ENCODE measurements at regions of chr19 and their contacts with region 1.

Region 1: GRCh38 chr19:41883821-41884733 is 1.1 kb downstream of the ARHGEF1 start:
- DNase-seq: peak; percentile 94
- ATAC-seq: peak; percentile 75
- H3K4me3 Mint-ChIP-seq: peak overlapping the region; percentile 68
- H3K27ac Mint-ChIP-seq: peak overlapping the region; percentile 96
- H3K4me1 Mint-ChIP-seq: peaks cover 54% of the 10 kb centered on the region
- H3K27me3 Mint-ChIP-seq: no peaks in the 10 kb centered on the region

Region 2: DNA sequence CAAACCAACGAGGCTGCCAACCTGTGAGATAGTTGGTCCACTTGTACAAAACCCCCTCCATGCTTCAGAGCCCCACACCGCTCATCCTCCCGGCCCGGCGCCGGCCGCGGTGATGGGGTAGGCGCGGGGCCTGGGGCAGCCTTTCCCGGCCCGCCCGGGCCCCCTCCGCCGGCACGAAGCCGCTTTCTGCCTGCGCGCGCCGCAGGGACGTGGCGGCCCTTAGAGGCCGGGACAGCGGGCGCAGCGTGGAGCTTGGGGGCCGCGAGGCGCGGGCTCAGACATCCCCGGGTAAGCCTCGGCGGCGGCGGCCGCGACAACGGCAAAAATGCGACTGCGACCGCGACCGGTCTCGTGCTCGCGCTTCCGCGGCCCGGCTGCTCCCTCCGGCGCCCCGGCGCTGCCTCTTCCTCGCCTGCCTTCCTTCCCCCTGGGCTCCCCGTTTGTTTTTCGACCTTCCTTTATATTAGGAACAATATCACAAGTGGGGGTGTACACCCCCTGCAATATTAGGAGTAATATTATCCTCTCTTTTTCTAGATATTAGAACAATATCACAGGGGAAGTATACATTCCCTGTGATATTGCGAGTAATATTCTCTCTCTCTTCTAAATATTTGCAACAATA is 362.0 kb before region 1 on chr19:
- CTCF ChIA-PET with region 1: no interaction called
- POLR2A ChIA-PET with region 1: no interaction called
- intact Hi-C with region 1: no loop called
- DNase-seq: peak; percentile 64
- ATAC-seq: peak; percentile 51
- H3K4me3 Mint-ChIP-seq: peak overlapping the region; percentile 66
- H3K27ac Mint-ChIP-seq: peak overlapping the region; percentile 89
- H3K4me1 Mint-ChIP-seq: peaks cover 20% of the 10 kb centered on the region
- H3K27me3 Mint-ChIP-seq: peaks cover 14% of the 10 kb centered on the region

Region 3: DNA sequence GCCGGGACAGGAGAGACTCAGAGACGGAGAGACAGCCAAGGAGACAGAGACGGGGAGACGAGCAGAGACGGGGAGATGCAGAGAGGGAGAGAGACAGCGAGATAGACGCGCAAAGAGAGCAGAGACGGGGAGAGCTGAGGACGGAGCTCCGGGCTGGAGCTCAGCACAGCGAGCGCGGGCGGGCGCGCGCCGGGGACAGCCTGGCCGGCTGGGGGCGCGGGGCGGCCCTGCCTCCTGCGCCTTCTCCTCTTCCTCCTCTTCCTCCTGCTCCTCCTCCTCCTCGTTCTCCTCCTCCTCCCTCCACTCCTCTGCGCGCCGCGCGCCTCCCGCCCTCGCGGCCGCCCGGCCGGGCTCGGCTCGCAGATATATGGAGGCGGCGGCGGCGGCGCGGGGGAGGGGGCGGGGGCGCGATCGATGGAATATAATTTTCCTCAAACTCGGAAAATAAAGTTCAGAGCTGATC is 44.2 kb after region 1 on chr19 and contains the start of gene ERFL:
- CTCF ChIA-PET with region 1: interaction called, 3 read pairs
- POLR2A ChIA-PET with region 1: no interaction called
- intact Hi-C with region 1: loop called (anchors 2 to 5 kb)
- DNase-seq: peak; percentile 56
- ATAC-seq: peak; percentile 54
- H3K4me3 Mint-ChIP-seq: peak within 1 kb of the TSS; percentile 77
- H3K27ac Mint-ChIP-seq: peak within 1 kb of the TSS; percentile 81
- H3K4me1 Mint-ChIP-seq: peaks cover 20% of the 10 kb centered on the region
- H3K27me3 Mint-ChIP-seq: peaks cover 1% of the 10 kb centered on the region
- total RNA-seq, gene ERFL: 1.7 to 1.9 TPM

Region 4: DNA sequence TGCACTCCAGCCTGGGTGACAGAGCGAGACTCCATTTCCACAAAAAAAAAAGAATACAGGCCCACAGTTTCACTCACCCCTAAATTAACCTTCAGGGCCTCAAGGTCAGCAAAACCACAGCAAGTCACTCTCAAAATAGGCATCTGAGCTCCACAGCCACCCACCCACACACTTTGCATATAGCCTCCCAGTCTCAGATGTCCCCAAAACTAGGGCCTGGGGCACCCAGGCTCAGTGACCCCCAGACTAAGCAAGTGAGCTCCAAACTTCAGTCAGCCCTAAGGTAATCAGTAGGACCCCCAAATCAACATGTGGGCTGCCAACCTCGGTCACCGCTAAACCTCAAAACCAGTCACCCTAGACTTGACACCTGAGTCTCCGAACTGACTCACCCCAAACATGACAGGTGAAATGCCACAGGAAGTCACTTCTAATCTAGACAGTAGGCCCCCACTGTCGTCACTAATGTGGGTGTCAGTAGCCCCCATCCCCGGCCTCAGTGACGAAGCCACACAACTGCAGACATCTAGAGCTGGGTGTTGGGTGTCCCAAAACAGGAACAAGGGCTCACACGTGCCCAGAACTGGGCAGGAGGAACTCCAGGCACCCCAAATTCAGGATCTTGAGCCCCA is 61.2 kb after region 1 on chr19:
- CTCF ChIA-PET with region 1: interaction called, 7 read pairs
- POLR2A ChIA-PET with region 1: interaction called, 12 read pairs
- intact Hi-C with region 1: loop called (anchors 1 kb)
- DNase-seq: peak; percentile 95
- ATAC-seq: peak; percentile 92
- H3K4me3 Mint-ChIP-seq: peak overlapping the region; percentile 41
- H3K27ac Mint-ChIP-seq: peak overlapping the region; percentile 96
- H3K4me1 Mint-ChIP-seq: peaks cover 50% of the 10 kb centered on the region
- H3K27me3 Mint-ChIP-seq: peaks cover 4% of the 10 kb centered on the region

Region 5: DNA sequence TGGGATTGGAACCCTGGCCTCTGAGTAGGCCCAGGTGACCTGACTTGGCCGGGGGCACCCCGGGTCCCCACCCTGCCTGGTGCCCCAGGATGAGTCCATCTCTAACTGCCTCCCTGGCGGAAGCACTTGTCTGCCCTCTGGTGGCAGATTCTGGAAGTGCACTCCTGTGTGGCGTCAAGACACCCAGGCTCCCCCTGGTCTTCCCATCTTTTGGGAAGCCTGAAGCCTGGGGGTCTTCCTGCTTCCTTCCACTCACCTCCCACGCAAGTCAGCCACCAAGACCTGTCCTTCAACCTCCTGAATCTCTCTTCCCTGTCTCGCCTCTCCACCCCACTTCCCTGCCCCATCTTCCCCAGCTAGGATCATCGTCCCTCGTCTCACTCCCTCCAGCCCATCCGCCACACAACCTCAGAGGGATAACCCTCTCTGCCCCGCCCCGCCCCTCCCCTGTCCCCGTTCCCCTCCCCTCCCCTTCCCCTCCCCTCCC is 67.7 kb after region 1 on chr19:
- CTCF ChIA-PET with region 1: interaction called, 7 read pairs
- POLR2A ChIA-PET with region 1: no interaction called
- intact Hi-C with region 1: loop called in 1 of 2 experiments (anchors 1 kb)
- DNase-seq: peak; percentile 94
- ATAC-seq: peak; percentile 90
- H3K4me3 Mint-ChIP-seq: no peak overlapping the region
- H3K27ac Mint-ChIP-seq: peak overlapping the region; percentile 7
- H3K4me1 Mint-ChIP-seq: peaks cover 15% of the 10 kb centered on the region
- H3K27me3 Mint-ChIP-seq: no peaks in the 10 kb centered on the region

Region 6: DNA sequence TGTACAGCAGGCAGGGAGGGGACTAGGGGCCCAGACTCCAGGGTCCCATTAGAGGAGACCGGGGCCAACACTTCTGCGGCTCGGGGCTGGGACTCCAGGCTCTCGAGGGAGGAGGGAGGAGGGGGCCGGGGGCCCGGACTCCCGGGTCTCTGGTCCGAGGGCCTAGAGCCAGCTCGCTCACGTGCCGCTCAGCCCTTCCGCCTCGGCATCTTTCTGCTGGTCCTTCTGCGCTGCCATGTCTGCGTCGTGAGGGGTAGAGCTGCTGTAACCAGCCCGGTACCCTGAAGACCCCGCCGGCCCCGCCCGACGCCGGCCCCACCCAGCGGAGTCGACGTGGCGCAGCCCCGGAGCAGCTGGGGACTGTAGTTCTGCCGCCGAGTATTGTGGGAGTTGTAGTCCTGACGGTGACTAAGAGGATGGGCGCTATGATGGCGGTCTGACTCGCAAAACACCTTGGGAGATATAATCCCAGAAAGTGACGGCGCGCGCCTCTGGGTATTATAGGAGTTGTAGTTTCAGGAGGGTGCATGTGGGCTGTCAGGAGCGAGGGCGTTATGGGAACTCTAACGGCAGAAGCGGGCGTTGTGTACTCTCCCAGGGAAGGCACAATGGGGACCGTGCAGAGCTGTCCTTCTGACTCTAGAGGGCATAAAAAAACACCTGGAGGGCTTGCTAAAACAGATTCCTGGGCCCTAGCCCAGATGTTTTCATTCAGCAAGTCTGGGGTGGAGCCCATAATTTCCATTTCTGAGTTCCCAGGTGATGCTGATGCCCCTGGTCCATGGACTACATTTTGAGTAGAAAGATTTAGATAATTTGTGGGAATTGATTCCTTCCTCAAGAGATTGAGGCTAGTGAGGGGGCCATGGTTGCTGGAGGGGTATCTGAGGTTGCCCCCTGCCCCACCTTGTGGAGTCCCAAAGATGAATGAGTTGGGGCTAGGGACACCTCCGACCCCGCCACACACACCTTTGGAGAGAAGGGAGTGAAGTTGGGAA is 75.3 kb after region 1 on chr19 and contains the start of gene RABAC1:
- CTCF ChIA-PET with region 1: interaction called, 10 read pairs
- POLR2A ChIA-PET with region 1: interaction called, 3 read pairs
- intact Hi-C with region 1: loop called in 1 of 2 experiments (anchors 1 kb)
- DNase-seq: peak; percentile 94
- ATAC-seq: peak; percentile 88
- H3K4me3 Mint-ChIP-seq: peak within 1 kb of the TSS; percentile 81
- H3K27ac Mint-ChIP-seq: peak within 1 kb of the TSS; percentile 87
- H3K4me1 Mint-ChIP-seq: peaks cover 16% of the 10 kb centered on the region
- H3K27me3 Mint-ChIP-seq: no peaks in the 10 kb centered on the region
- total RNA-seq, gene RABAC1: 35.3 to 49.7 TPM

Measured in activated CD4-positive, alpha-beta T cell treated with anti-CD3 and anti-CD28 coated beads for 36 hours (primary cell).